Naive thymus-derived CD4-positive, alpha-beta T cell (primary cell): ENCODE measurements at regions of chr5 and their contacts with region 1.

Region 1: DNA sequence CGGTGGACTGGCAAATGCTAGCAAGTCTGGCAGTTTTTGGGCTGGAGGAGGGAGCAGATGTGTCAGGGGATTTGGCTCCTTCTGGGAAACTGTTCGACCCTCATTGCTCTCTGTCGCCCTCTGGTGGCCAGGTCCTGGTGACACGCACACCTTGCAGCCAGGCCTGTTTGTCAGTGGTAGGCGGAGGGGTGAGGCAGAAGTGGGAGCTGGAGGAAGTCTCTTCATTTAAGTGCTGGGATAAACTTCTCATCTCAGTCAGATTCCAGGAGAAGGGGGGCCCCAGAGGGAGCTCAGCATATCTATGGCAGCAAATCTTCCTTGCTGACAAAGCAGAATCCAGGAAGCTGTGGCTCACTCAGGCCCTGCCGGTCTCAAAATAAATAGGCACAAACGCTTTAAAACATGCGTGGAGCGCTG is 326.5 kb downstream of the ZSWIM6 start:
- DNase-seq: peak; percentile 40 to 83 (median 66)
- ATAC-seq: peak; percentile 85
- H3K4me3 ChIP-seq: no peak overlapping the region
- H3K4me3 Mint-ChIP-seq: no peak overlapping the region
- H3K27ac ChIP-seq: no peak overlapping the region
- H3K27ac Mint-ChIP-seq: peak overlapping the region in 1 of 9 donors; percentile 6
- H3K4me1 ChIP-seq: no peaks in the 10 kb centered on the region
- H3K4me1 Mint-ChIP-seq: peaks cover 0 to 4% (median 0%) of the 10 kb centered on the region in 7 donors
- H3K27me3 ChIP-seq: no peaks in the 10 kb centered on the region
- H3K27me3 Mint-ChIP-seq: peaks cover 5 to 17% (median 12%) of the 10 kb centered on the region in 5 donors

Region 2: GRCh38 chr5:60514152-60514551 is 1144.4 kb before region 1 on chr5:
- CTCF ChIA-PET with region 1: no interaction called
- POLR2A ChIA-PET with region 1: no interaction called
- intact Hi-C with region 1: no loop called
- DNase-seq: no peak
- ATAC-seq: no peak
- H3K4me3 ChIP-seq: no peak overlapping the region
- H3K4me3 Mint-ChIP-seq: no peak overlapping the region
- H3K27ac ChIP-seq: no peak overlapping the region
- H3K27ac Mint-ChIP-seq: no peak overlapping the region
- H3K4me1 ChIP-seq: no peaks in the 10 kb centered on the region
- H3K4me1 Mint-ChIP-seq: peaks cover 0 to 1% (median 0%) of the 10 kb centered on the region in 7 donors
- H3K27me3 ChIP-seq: no peaks in the 10 kb centered on the region
- H3K27me3 Mint-ChIP-seq: peaks cover 0 to 14% (median 0%) of the 10 kb centered on the region in 5 donors

Region 3: GRCh38 chr5:60960591-60960990 is 698.0 kb before region 1 on chr5:
- CTCF ChIA-PET with region 1: interaction called, 32 read pairs
- POLR2A ChIA-PET with region 1: no interaction called
- intact Hi-C with region 1: loop called (anchors 1 to 2 kb)
- DNase-seq: peak in 5 of 9 donors; percentile 18 to 48 (median 39)
- ATAC-seq: peak; percentile 54
- H3K4me3 ChIP-seq: no peak overlapping the region
- H3K4me3 Mint-ChIP-seq: peak overlapping the region in 1 of 10 donors; percentile 9
- H3K27ac ChIP-seq: no peak overlapping the region
- H3K27ac Mint-ChIP-seq: peak overlapping the region in 1 of 9 donors; percentile 8
- H3K4me1 ChIP-seq: no peaks in the 10 kb centered on the region
- H3K4me1 Mint-ChIP-seq: peaks cover 0 to 30% (median 17%) of the 10 kb centered on the region in 7 donors
- H3K27me3 ChIP-seq: no peaks in the 10 kb centered on the region
- H3K27me3 Mint-ChIP-seq: no peaks in the 10 kb centered on the region

Region 4: DNA sequence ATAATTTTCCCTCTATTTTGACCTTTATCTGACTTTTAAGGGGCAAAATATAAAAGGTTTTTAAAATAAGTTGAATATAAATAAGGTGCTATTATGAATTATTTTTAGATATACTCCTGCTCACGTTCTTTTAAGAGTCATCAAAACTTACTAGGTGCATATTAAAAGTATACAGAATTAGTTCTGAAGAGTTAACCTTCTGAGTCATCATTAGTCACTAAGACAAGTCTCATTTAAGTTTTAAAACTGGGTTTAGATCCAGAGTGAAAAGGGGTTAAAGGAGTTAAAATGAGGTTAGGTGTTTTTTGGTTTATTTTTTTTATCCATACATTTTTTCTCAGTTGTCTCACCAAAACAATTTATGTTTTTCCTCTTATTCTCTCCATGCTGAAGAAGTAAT is 538.1 kb before region 1 on chr5:
- CTCF ChIA-PET with region 1: no interaction called
- POLR2A ChIA-PET with region 1: no interaction called
- intact Hi-C with region 1: no loop called
- DNase-seq: no peak
- ATAC-seq: no peak
- H3K4me3 ChIP-seq: no peak overlapping the region
- H3K4me3 Mint-ChIP-seq: no peak overlapping the region
- H3K27ac ChIP-seq: no peak overlapping the region
- H3K27ac Mint-ChIP-seq: no peak overlapping the region
- H3K4me1 ChIP-seq: no peaks in the 10 kb centered on the region
- H3K4me1 Mint-ChIP-seq: no peaks in the 10 kb centered on the region
- H3K27me3 ChIP-seq: no peaks in the 10 kb centered on the region
- H3K27me3 Mint-ChIP-seq: no peaks in the 10 kb centered on the region

Region 5: DNA sequence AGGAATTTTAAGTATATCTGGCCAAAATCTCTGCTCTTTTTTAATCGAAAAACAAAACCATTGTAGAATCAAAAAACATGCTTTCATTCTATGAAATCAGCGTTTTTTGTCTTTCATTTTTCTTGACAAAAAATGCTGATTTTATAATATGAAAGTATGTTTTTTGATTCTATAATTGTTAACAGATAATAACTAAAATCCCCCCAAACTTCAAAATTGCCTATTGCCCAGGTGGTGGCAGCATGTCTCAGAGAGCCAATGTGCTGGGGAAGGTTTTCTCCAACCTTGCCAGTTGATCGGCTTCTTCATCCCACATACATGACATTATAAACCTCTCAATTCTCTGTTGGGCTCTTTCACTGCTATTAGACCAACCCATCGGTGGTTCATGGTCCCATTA is 491.2 kb before region 1 on chr5:
- CTCF ChIA-PET with region 1: interaction called, 3 read pairs
- POLR2A ChIA-PET with region 1: no interaction called
- intact Hi-C with region 1: loop called (anchors 1 to 2 kb)
- DNase-seq: no peak
- ATAC-seq: no peak
- H3K4me3 ChIP-seq: no peak overlapping the region
- H3K4me3 Mint-ChIP-seq: no peak overlapping the region
- H3K27ac ChIP-seq: no peak overlapping the region
- H3K27ac Mint-ChIP-seq: no peak overlapping the region
- H3K4me1 ChIP-seq: peaks cover 0 to 8% of the 10 kb centered on the region in 2 donors
- H3K4me1 Mint-ChIP-seq: peaks cover 5 to 18% (median 13%) of the 10 kb centered on the region in 7 donors
- H3K27me3 ChIP-seq: no peaks in the 10 kb centered on the region
- H3K27me3 Mint-ChIP-seq: no peaks in the 10 kb centered on the region

Region 6: DNA sequence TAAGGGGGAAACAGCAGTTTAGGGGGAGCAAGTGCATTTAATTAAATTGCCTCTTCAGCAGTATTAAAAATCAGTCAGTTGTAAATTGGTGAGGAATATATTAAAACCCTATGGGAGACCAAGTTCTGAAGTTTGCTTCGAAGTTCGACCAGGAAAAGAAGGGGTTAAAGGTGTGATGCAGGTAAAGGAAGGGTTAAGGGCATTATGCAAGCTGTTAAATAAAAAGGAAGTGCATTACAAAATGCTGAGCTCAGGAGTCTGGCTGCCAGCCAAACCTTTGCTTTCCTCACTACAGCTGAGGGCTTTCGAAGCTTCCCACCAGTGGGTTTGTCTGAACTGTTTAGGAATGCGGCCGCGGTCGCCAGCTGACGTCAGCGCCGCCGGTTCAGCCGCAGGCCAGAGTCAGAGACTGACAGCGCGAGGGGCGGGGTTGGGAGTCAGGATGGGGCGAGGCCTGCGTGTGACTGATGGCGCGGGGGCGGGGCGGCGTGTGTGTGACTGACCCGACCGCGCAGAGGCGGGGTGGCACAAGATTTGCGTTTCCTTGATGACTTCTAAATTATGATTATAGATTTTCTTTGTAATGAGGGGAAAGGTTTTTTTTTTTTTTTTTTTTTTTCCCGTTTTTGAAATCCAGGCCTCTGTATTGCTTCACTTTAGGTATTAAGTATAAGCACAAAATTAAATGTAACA is 250.0 kb before region 1 on chr5:
- CTCF ChIA-PET with region 1: no interaction called
- POLR2A ChIA-PET with region 1: no interaction called
- intact Hi-C with region 1: loop called in 1 of 2 experiments (anchors 2 kb)
- DNase-seq: peak; percentile 92 to 98 (median 95)
- ATAC-seq: peak; percentile 98
- H3K4me3 ChIP-seq: peak overlapping the region; percentile 36
- H3K4me3 Mint-ChIP-seq: peak overlapping the region; percentile 74 to 94 (median 84)
- H3K27ac ChIP-seq: peak overlapping the region; percentile 32
- H3K27ac Mint-ChIP-seq: peak overlapping the region; percentile 59 to 98 (median 91)
- H3K4me1 ChIP-seq: peaks cover 12 to 14% of the 10 kb centered on the region in 2 donors
- H3K4me1 Mint-ChIP-seq: peaks cover 22 to 38% (median 32%) of the 10 kb centered on the region in 7 donors
- H3K27me3 ChIP-seq: no peaks in the 10 kb centered on the region
- H3K27me3 Mint-ChIP-seq: peaks cover 0 to 15% (median 0%) of the 10 kb centered on the region in 5 donors

Region 7: GRCh38 chr5:61878471-61878870 is 219.9 kb after region 1 on chr5:
- CTCF ChIA-PET with region 1: no interaction called
- POLR2A ChIA-PET with region 1: no interaction called
- intact Hi-C with region 1: no loop called
- DNase-seq: no peak
- ATAC-seq: no peak
- H3K4me3 ChIP-seq: no peak overlapping the region
- H3K4me3 Mint-ChIP-seq: no peak overlapping the region
- H3K27ac ChIP-seq: no peak overlapping the region
- H3K27ac Mint-ChIP-seq: no peak overlapping the region
- H3K4me1 ChIP-seq: no peaks in the 10 kb centered on the region
- H3K4me1 Mint-ChIP-seq: no peaks in the 10 kb centered on the region
- H3K27me3 ChIP-seq: no peaks in the 10 kb centered on the region
- H3K27me3 Mint-ChIP-seq: peaks cover 0 to 10% (median 0%) of the 10 kb centered on the region in 5 donors